ENCODE measurements at regions of chr20 and their contacts with region 1.

Region 1: GRCh38 chr20:64279826-64280459 is 24.4 kb downstream of the PCMTD2 start:
- DNase-seq: no peak
- H3K4me3 Mint-ChIP-seq: no peak overlapping the region
- H3K27ac Mint-ChIP-seq: no peak overlapping the region
- H3K4me1 Mint-ChIP-seq: peaks cover 6% of the 10 kb centered on the region
- H3K27me3 Mint-ChIP-seq: no peaks in the 10 kb centered on the region

Region 2: GRCh38 chr20:64255361-64256281 is 24.3 kb before region 1 on chr20 and contains the start of gene PCMTD2:
- CTCF ChIA-PET with region 1: interaction called, 20 read pairs
- intact Hi-C with region 1: no loop called
- DNase-seq: peak; percentile 88
- H3K4me3 Mint-ChIP-seq: peak within 1 kb of the TSS; percentile 87
- H3K27ac Mint-ChIP-seq: peak within 1 kb of the TSS; percentile 87
- H3K4me1 Mint-ChIP-seq: peaks cover 47% of the 10 kb centered on the region
- H3K27me3 Mint-ChIP-seq: peaks cover 3% of the 10 kb centered on the region
- total RNA-seq, gene PCMTD2: 34.5 to 36.7 TPM

Measured in activated naive CD4-positive, alpha-beta T cell treated with anti-CD3 and anti-CD28 coated beads for 36 hours (primary cell).